T-cell (primary cell): ENCODE measurements at regions of chr22 and their contacts with region 1.

Region 1: DNA sequence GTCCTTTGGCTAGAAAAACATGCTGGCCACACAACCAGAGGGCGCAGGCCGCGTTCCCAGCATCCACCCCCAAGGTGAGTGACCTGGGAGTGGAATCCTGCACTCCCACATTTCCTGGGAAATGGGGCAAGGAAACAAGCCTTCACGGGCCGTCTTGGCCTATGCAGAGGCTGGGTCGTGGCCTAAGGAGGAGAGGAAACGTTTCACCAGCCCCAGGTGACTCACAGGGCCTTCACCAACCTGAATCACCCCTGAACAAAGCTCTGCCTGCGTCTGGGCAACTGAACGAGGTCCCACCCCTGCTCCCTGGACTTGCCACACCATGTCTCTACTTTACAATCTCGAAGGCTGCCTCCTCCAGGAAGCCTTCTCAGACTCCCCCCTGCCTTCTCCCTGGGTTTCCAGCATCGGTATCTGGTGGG is 13.2 kb downstream of the MYH9 start:
- DNase-seq: peak in 3 of 35 experiments; percentile 48 to 63 (median 63)
- ATAC-seq: peak in 3 of 4 experiments; percentile 25 to 37 (median 36)
- H3K4me3 ChIP-seq: peak overlapping the region in 1 of 2 donors; percentile 2
- H3K4me3 Mint-ChIP-seq: peak overlapping the region; percentile 58 to 98 (median 62)
- H3K27ac ChIP-seq: peak overlapping the region; percentile 89
- H3K27ac Mint-ChIP-seq: peak overlapping the region; percentile 95 to 96
- H3K4me1 ChIP-seq: peaks cover 83 to 100% of the 10 kb centered on the region in 2 experiments
- H3K4me1 Mint-ChIP-seq: peaks cover 94 to 97% (median 96%) of the 10 kb centered on the region in 3 donors
- H3K27me3 ChIP-seq: no peaks in the 10 kb centered on the region
- H3K27me3 Mint-ChIP-seq: no peaks in the 10 kb centered on the region

Region 2: GRCh38 chr22:36387752-36388518 is 13.3 kb after region 1 on chr22 and contains the start of gene MYH9:
- CTCF ChIA-PET with region 1: interaction called in 1 of 2 experiments, 11 read pairs
- POLR2A ChIA-PET with region 1: interaction called in 1 of 2 experiments, 8 read pairs
- DNase-seq: peak; percentile 95 to 99 (median 98)
- ATAC-seq: peak; percentile 83 to 89 (median 85)
- H3K4me3 ChIP-seq: peak within 1 kb of the TSS; percentile 86 to 97
- H3K4me3 Mint-ChIP-seq: peak within 1 kb of the TSS; percentile 88 to 98 (median 95)
- H3K27ac ChIP-seq: peak within 1 kb of the TSS; percentile 79
- H3K27ac Mint-ChIP-seq: peak within 1 kb of the TSS; percentile 89 to 98
- H3K4me1 ChIP-seq: peaks cover 12 to 37% of the 10 kb centered on the region in 2 experiments
- H3K4me1 Mint-ChIP-seq: peaks cover 26 to 48% (median 41%) of the 10 kb centered on the region in 3 donors
- H3K27me3 ChIP-seq: no peaks in the 10 kb centered on the region
- H3K27me3 Mint-ChIP-seq: no peaks in the 10 kb centered on the region
- total RNA-seq, gene MYH9: 816 to 1,109 (median 896) TPM

Region 3: GRCh38 chr22:36413022-36413775 is 38.6 kb after region 1 on chr22:
- CTCF ChIA-PET with region 1: no interaction called
- POLR2A ChIA-PET with region 1: interaction called in 1 of 2 experiments, 10 read pairs
- DNase-seq: no peak
- ATAC-seq: no peak
- H3K4me3 ChIP-seq: no peak overlapping the region
- H3K4me3 Mint-ChIP-seq: no peak overlapping the region
- H3K27ac ChIP-seq: no peak overlapping the region
- H3K27ac Mint-ChIP-seq: no peak overlapping the region
- H3K4me1 ChIP-seq: peaks cover 6 to 48% of the 10 kb centered on the region in 2 experiments
- H3K4me1 Mint-ChIP-seq: peaks cover 30 to 50% (median 35%) of the 10 kb centered on the region in 3 donors
- H3K27me3 ChIP-seq: no peaks in the 10 kb centered on the region
- H3K27me3 Mint-ChIP-seq: no peaks in the 10 kb centered on the region

Region 4: GRCh38 chr22:36454916-36455570 is 80.4 kb after region 1 on chr22:
- CTCF ChIA-PET with region 1: interaction called in 1 of 2 experiments, 3 read pairs
- POLR2A ChIA-PET with region 1: interaction called in 1 of 2 experiments, 10 read pairs
- DNase-seq: peak; percentile 83 to 98 (median 92)
- ATAC-seq: peak; percentile 76 to 83 (median 82)
- H3K4me3 ChIP-seq: peak overlapping the region; percentile 55 to 72
- H3K4me3 Mint-ChIP-seq: peak overlapping the region; percentile 46 to 75 (median 70)
- H3K27ac ChIP-seq: peak overlapping the region; percentile 95
- H3K27ac Mint-ChIP-seq: peak overlapping the region; percentile 85 to 88
- H3K4me1 ChIP-seq: peaks cover 14 to 60% of the 10 kb centered on the region in 2 experiments
- H3K4me1 Mint-ChIP-seq: peaks cover 43 to 46% (median 46%) of the 10 kb centered on the region in 3 donors
- H3K27me3 ChIP-seq: no peaks in the 10 kb centered on the region
- H3K27me3 Mint-ChIP-seq: no peaks in the 10 kb centered on the region

Region 5: GRCh38 chr22:36528795-36529751 is 154.5 kb after region 1 on chr22 and contains the start of gene EIF3D:
- CTCF ChIA-PET with region 1: no interaction called
- POLR2A ChIA-PET with region 1: interaction called in 1 of 2 experiments, 12 read pairs
- DNase-seq: peak; percentile 95 to 100 (median 99)
- ATAC-seq: peak; percentile 92 to 96 (median 94)
- H3K4me3 ChIP-seq: peak within 1 kb of the TSS; percentile 86 to 90
- H3K4me3 Mint-ChIP-seq: peak within 1 kb of the TSS; percentile 89 to 95 (median 93)
- H3K27ac ChIP-seq: peak within 1 kb of the TSS; percentile 93
- H3K27ac Mint-ChIP-seq: peak within 1 kb of the TSS; percentile 99
- H3K4me1 ChIP-seq: peaks cover 10 to 21% of the 10 kb centered on the region in 2 experiments
- H3K4me1 Mint-ChIP-seq: peaks cover 20 to 25% (median 23%) of the 10 kb centered on the region in 3 donors
- H3K27me3 ChIP-seq: no peaks in the 10 kb centered on the region
- H3K27me3 Mint-ChIP-seq: no peaks in the 10 kb centered on the region
- total RNA-seq, gene EIF3D: 218 to 273 (median 242) TPM